Naive thymus-derived CD8-positive, alpha-beta T cell (primary cell): ENCODE measurements at regions of chr20 and their contacts with region 1.

Region 1: GRCh38 chr20:844473-845225 is 11.1 kb downstream of the FAM110A start:
- DNase-seq: peak; percentile 71 to 97 (median 87)
- ATAC-seq: peak; percentile 87 to 92
- H3K4me3 Mint-ChIP-seq: peak overlapping the region; percentile 87 to 98 (median 93)
- H3K27ac Mint-ChIP-seq: peak overlapping the region; percentile 71 to 97 (median 90)
- H3K4me1 Mint-ChIP-seq: peaks cover 28 to 69% (median 63%) of the 10 kb centered on the region in 4 donors
- H3K27me3 Mint-ChIP-seq: no peaks in the 10 kb centered on the region

Region 2: GRCh38 chr20:815914-816606 is 28.6 kb before region 1 on chr20:
- POLR2A ChIA-PET with region 1: no interaction called
- DNase-seq: peak; percentile 52 to 81 (median 66)
- ATAC-seq: peak; percentile 40 to 64
- H3K4me3 Mint-ChIP-seq: no peak overlapping the region
- H3K27ac Mint-ChIP-seq: peak overlapping the region in 2 of 10 donors; percentile 14 to 60
- H3K4me1 Mint-ChIP-seq: peaks cover 6 to 19% (median 7%) of the 10 kb centered on the region in 4 donors
- H3K27me3 Mint-ChIP-seq: peaks cover 8 to 51% (median 13%) of the 10 kb centered on the region in 5 donors

Region 3: GRCh38 chr20:833450-834150 is 11.0 kb before region 1 on chr20 and contains the start of gene FAM110A:
- POLR2A ChIA-PET with region 1: interaction called, 99 read pairs
- DNase-seq: peak; percentile 90 to 97 (median 94)
- ATAC-seq: peak; percentile 89 to 94
- H3K4me3 Mint-ChIP-seq: peak within 1 kb of the TSS; percentile 81 to 94 (median 88)
- H3K27ac Mint-ChIP-seq: peak within 1 kb of the TSS; percentile 60 to 96 (median 89)
- H3K4me1 Mint-ChIP-seq: peaks cover 25 to 56% (median 45%) of the 10 kb centered on the region in 4 donors
- H3K27me3 Mint-ChIP-seq: no peaks in the 10 kb centered on the region
- polyA plus RNA-seq, gene FAM110A: 4.5 to 21.4 (median 9.4) TPM

Region 4: GRCh38 chr20:856361-857040 is 11.9 kb after region 1 on chr20:
- POLR2A ChIA-PET with region 1: interaction called, 20 read pairs
- DNase-seq: peak in 9 of 10 donors; percentile 25 to 70 (median 56)
- ATAC-seq: peak; percentile 97
- H3K4me3 Mint-ChIP-seq: peak overlapping the region; percentile 57 to 83 (median 70)
- H3K27ac Mint-ChIP-seq: peak overlapping the region; percentile 63 to 93 (median 87)
- H3K4me1 Mint-ChIP-seq: peaks cover 32 to 82% (median 73%) of the 10 kb centered on the region in 4 donors
- H3K27me3 Mint-ChIP-seq: no peaks in the 10 kb centered on the region

Region 5: DNA sequence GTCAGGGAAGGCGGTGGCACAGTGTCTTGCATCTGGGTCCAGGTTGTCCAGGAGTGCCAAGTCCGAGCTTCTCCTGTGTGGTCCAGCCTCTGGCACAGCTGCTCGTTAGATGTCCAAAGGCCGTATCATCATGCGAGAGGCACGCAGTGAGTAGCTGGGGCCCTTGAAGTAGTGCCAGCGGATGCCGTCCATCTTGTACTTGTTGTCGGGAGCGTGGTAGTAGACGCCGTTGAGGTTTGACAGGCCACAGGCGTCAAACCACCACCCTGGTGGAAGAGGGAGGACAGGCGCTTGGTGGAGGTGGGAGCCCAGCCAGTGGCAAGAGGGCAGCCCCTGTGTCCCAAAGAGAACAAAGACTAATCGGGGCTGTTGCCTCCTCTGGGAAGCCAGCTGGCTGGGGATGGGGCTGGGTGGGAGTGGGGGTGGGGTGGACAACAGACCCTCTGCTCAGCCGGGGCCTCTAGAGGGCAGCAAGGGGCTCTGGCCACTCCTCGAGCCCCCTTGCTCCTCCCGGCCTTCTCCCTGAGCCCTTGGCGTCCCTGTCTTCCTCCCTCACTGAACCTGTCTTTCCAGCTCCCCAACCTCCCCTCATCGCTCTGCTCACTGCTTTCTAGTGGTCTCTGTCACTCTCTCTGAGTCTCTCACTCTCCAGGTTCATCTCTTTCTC is 28.3 kb after region 1 on chr20:
- POLR2A ChIA-PET with region 1: no interaction called
- DNase-seq: no peak
- ATAC-seq: no peak
- H3K4me3 Mint-ChIP-seq: no peak overlapping the region
- H3K27ac Mint-ChIP-seq: no peak overlapping the region
- H3K4me1 Mint-ChIP-seq: peaks cover 0 to 10% (median 1%) of the 10 kb centered on the region in 4 donors
- H3K27me3 Mint-ChIP-seq: peaks cover 0 to 9% (median 0%) of the 10 kb centered on the region in 5 donors